A549 (cell line): ENCODE measurements at regions of chr18 and their contacts with region 1.

Region 1: GRCh38 chr18:43571078-43571689 is 293.9 kb upstream of the SYT4 start:
- DNase-seq: peak; percentile 3 to 33
- ATAC-seq: no peak
- H3K4me3 ChIP-seq: no peak overlapping the region
- H3K27ac ChIP-seq: no peak overlapping the region
- H3K4me1 ChIP-seq: no peaks in the 10 kb centered on the region
- CTCF ChIP-seq: peak; percentile 56
- EP300 ChIP-seq: no peak
- POLR2A ChIP-seq: no peak
- RAD21 ChIP-seq: peak; percentile 53 to 58; a peak in 4 of 5 replicates

Region 2: DNA sequence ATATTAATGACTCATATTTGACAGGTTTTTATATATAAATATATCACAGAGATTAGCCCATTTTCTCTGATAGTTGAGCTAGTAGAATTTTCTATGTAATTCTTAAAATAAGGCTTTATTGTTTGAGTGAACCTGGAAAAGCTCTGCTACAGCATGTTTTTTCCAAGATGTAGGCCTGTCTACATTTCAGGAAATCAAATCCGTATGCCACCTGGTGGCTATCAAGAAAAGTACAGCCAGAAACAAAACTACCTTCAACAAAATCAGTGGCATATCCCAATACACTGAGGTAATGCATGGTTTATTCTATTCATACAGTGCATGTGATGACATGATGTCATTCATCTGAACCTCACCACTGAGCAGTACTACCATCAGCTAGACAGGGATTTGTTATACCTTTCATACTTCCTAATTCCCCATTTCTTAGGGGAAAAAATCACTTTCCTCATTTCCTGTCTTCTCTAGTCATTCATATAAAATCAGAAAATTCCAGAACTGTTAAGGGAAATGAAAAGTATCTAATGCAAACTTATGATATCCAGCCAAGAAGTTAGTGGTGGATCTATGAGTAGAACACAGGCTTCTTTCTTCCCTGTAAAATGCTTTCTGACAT is 16.5 kb after region 1 on chr18:
- CTCF ChIA-PET with region 1: interaction called, 57 read pairs
- POLR2A ChIA-PET with region 1: no interaction called
- DNase-seq: peak in 1 of 2 experiments; percentile 17
- ATAC-seq: peak in 1 of 2 experiments; percentile 66; a peak in 2 of 6 replicates
- H3K4me3 ChIP-seq: no peak overlapping the region
- H3K27ac ChIP-seq: no peak overlapping the region
- H3K4me1 ChIP-seq: no peaks in the 10 kb centered on the region
- CTCF ChIP-seq: peak; percentile 34; the same call in 2 of the 3 replicates
- EP300 ChIP-seq: no peak
- POLR2A ChIP-seq: no peak
- RAD21 ChIP-seq: peak; percentile 18 to 35; a peak in 3 of 5 replicates

Region 3: GRCh38 chr18:43596105-43596712 is 25.0 kb after region 1 on chr18:
- CTCF ChIA-PET with region 1: interaction called, 11 read pairs
- POLR2A ChIA-PET with region 1: no interaction called
- DNase-seq: peak; percentile 5 to 23
- ATAC-seq: peak; percentile 76 to 80; a peak in 4 of 6 replicates
- H3K4me3 ChIP-seq: no peak overlapping the region
- H3K27ac ChIP-seq: no peak overlapping the region
- H3K4me1 ChIP-seq: no peaks in the 10 kb centered on the region
- CTCF ChIP-seq: peak; percentile 41
- EP300 ChIP-seq: no peak
- POLR2A ChIP-seq: no peak
- RAD21 ChIP-seq: peak; percentile 41 to 51; a peak in 4 of 5 replicates